Activated CD4-positive, alpha-beta T cell treated with anti-CD3 and anti-CD28 coated beads, Interleukin-2, amount 10 ng/mL, durations not matched to agents 7 days and 5 days (primary cell): ENCODE measurements at regions of chr4 and their contacts with region 1.

Region 1: DNA sequence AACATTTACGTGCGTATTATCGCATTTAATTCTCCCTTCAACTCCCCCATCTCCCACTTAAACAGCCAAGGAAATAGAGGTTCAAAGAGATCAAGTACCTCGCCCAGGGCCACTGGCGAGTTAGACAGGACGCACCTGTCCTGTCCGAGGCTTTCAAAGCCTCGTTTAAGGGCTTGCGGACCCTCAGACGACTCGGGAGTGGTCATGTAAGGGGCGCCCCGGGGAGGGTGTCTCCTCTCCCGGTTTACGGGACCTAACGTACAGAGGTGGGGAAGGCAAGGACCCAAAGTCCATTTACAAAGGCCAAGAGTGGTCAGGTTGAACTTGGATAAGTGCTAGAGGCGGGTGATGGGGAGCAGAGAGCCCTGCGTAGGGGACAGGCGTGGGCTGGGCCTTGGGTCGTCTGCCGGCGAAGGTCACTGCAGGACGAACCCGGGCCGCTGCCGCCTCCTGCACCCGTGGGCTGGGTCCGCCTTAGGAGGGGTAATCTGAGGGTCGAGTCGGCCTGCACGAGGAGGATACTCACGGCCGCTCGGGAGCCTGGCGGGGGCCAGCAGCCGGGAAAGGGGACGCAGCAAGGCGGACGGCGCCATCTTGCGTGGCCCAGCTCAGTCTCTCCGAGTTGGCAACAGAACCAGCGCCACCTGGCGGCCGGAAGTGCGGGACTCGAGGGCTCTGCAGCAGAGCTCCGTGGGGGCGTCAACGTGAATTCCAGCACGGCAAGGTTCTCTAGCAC is 5.9 kb upstream of the NAA15 start:
- DNase-seq: peak; percentile 98
- H3K4me3 Mint-ChIP-seq: peak overlapping the region; percentile 90
- H3K27ac Mint-ChIP-seq: peak overlapping the region; percentile 98
- H3K4me1 Mint-ChIP-seq: peaks cover 42% of the 10 kb centered on the region
- H3K27me3 Mint-ChIP-seq: no peaks in the 10 kb centered on the region

Region 2: GRCh38 chr4:138897811-138898226 is 397.6 kb before region 1 on chr4:
- CTCF ChIA-PET with region 1: no interaction called
- POLR2A ChIA-PET with region 1: no interaction called
- DNase-seq: no peak
- H3K4me3 Mint-ChIP-seq: no peak overlapping the region
- H3K27ac Mint-ChIP-seq: no peak overlapping the region
- H3K4me1 Mint-ChIP-seq: peaks cover 3% of the 10 kb centered on the region
- H3K27me3 Mint-ChIP-seq: peaks cover 8% of the 10 kb centered on the region

Region 3: DNA sequence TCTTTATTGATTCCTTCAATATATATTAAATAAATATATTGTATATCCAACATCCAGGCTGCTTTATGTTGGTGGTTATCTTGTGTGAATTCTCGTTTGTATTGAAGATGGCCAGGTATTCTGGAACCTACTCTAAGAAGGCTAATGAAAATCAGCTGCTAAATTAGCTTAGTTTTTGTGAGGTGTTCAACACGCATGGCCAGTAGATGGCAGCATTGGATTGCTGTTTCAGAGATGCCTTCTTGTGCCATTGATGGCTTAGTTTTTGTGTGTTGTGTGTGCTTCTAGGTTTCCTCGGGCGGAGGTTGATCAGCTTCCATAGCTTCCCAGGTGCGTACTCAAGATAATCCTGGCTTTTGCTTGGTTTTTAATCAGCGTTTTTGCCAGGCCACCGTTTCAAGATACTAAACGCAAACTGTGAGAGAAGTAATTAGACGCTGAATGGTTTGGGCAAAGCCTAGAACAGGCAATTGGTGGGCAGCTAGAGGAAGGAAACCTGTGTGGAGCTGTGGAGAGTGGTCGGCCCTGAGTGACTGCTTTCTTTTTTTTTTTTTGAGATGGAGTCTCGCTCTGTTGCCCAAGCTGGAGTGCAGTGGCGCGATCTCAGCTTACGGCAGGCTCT is 264.6 kb before region 1 on chr4:
- CTCF ChIA-PET with region 1: interaction called, 11 read pairs
- POLR2A ChIA-PET with region 1: no interaction called
- DNase-seq: peak; percentile 87
- H3K4me3 Mint-ChIP-seq: no peak overlapping the region
- H3K27ac Mint-ChIP-seq: no peak overlapping the region
- H3K4me1 Mint-ChIP-seq: peaks cover 9% of the 10 kb centered on the region
- H3K27me3 Mint-ChIP-seq: no peaks in the 10 kb centered on the region

Region 4: DNA sequence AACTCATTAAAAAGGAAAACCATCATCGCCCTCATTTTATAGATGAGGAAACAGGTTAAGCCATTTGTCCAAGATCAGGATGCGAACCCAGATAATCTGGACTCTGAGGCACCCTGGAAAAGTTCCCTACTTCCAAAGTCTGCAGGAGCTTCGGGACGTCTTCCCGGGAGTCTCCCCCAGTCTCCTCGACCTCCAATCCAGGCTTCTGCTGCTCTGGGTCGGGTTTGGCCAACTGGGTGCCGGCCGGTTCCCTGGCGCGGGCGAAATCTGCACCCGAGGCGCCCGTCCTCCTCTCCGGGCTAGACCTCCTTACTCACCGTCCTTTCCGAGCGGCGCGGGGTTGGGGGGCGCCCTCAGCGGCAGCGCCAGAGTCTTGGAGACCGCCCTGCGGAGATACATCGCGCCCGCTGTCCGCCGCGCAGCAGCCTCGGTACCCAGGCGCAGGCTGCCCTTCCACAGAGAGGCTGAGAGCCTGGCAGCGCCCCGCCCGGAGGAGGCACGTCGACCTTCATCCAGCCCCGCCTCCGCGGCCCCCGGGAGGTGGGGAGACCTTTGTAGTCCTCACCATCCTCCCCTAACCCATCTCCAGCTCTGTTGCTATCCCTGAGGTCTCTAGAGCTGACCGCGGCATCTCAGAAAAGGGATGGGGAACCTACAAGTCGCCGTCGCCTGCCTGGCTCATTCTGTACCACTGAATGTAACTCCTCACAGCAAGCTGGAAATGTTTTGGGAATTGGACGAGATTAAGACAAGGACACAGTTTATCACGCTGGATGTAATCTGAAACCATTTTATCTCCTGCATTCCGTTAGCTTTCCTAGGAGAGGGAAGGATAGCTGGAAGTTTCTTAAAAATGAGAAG is 15.4 kb before region 1 on chr4 and contains the start of gene MGARP:
- CTCF ChIA-PET with region 1: interaction called, 15 read pairs
- POLR2A ChIA-PET with region 1: no interaction called
- DNase-seq: no peak
- H3K4me3 Mint-ChIP-seq: peak within 1 kb of the TSS; percentile 63
- H3K27ac Mint-ChIP-seq: no peak within 1 kb of the TSS
- H3K4me1 Mint-ChIP-seq: peaks cover 19% of the 10 kb centered on the region
- H3K27me3 Mint-ChIP-seq: peaks cover 56% of the 10 kb centered on the region
- total RNA-seq, gene MGARP: 0.21 to 0.25 TPM

Region 5: GRCh38 chr4:139312552-139313332 is 17.4 kb after region 1 on chr4:
- CTCF ChIA-PET with region 1: interaction called, 13 read pairs
- POLR2A ChIA-PET with region 1: no interaction called
- DNase-seq: no peak
- H3K4me3 Mint-ChIP-seq: no peak overlapping the region
- H3K27ac Mint-ChIP-seq: peak overlapping the region; percentile 93
- H3K4me1 Mint-ChIP-seq: peaks cover 63% of the 10 kb centered on the region
- H3K27me3 Mint-ChIP-seq: no peaks in the 10 kb centered on the region